ENCODE measurements at regions of chr11 and their contacts with region 1.

Region 1: GRCh38 chr11:27497284-27497866 is 9.2 kb downstream of the LIN7C start:
- DNase-seq: no peak
- H3K4me3 Mint-ChIP-seq: no peak overlapping the region
- H3K27ac Mint-ChIP-seq: no peak overlapping the region
- H3K4me1 Mint-ChIP-seq: peaks cover 19% of the 10 kb centered on the region
- H3K27me3 Mint-ChIP-seq: no peaks in the 10 kb centered on the region

Region 2: GRCh38 chr11:27183672-27184457 is 313.5 kb before region 1 on chr11:
- CTCF ChIA-PET with region 1: interaction called, 17 read pairs
- intact Hi-C with region 1: loop called (anchors 1 kb)
- DNase-seq: peak; percentile 68
- H3K4me3 Mint-ChIP-seq: no peak overlapping the region
- H3K27ac Mint-ChIP-seq: no peak overlapping the region
- H3K4me1 Mint-ChIP-seq: no peaks in the 10 kb centered on the region
- H3K27me3 Mint-ChIP-seq: peaks cover 16% of the 10 kb centered on the region